ENCODE measurements at regions of chr1 and their contacts with region 1.

Region 1: DNA sequence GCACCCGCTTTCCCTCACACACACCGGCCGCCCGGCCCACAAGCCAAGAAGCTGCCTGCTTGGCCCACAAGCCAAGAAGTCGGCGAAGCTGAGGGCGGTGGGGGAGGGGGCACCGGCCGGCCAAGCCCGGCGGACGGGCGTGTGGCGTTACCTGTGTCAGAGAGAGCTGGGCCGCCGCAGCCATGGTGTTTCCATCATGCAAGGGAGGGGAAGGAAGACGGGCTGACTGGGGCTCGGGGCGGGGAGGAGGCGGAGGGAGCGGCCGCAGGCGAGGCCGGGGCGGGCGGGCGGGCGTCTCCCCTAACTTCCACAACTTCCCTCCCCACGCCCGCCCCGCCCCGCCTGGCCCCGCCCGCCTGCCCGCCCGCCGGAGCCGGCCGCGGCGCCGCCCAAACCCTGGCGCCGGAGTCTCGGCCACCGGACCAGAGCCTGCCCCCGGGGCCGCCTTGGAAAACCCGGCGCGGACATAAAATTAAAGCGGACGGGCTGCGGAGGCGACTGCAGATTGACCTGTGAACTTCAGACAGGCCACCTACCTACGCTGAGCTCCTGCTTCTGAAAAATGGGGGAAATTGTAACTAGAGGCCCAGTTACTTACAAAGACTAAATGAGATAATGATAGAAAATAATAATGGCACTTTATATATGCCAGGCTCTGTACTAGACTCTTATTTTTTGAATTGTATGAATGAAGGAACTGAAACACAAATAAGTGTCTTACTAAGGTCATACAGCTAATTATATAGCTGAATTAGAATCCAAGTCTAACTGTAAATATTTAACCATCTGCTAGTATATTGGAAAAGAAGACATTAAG is at the start of gene EPS15:
- DNase-seq: peak; percentile 62 to 90 (median 77)
- ATAC-seq: peak; percentile 86
- H3K4me3 ChIP-seq: peak within 1 kb of the TSS; percentile 87
- H3K4me3 Mint-ChIP-seq: peak within 1 kb of the TSS; percentile 89 to 97 (median 94)
- H3K27ac ChIP-seq: peak within 1 kb of the TSS; percentile 66
- H3K27ac Mint-ChIP-seq: peak within 1 kb of the TSS; percentile 86 to 95 (median 90)
- H3K4me1 ChIP-seq: peaks cover 31 to 34% of the 10 kb centered on the region in 2 donors
- H3K4me1 Mint-ChIP-seq: peaks cover 46 to 58% (median 55%) of the 10 kb centered on the region in 7 donors
- H3K27me3 ChIP-seq: no peaks in the 10 kb centered on the region
- H3K27me3 Mint-ChIP-seq: no peaks in the 10 kb centered on the region
- total RNA-seq, gene EPS15: 44.8 to 79.9 (median 53.5) TPM

Region 2: GRCh38 chr1:50959913-50960844 is 559.1 kb before region 1 on chr1 and contains the start of gene FAF1:
- CTCF ChIA-PET with region 1: no interaction called
- POLR2A ChIA-PET with region 1: no interaction called
- intact Hi-C with region 1: loop called in 1 of 2 experiments (anchors 2 kb)
- DNase-seq: peak; percentile 94 to 98 (median 98)
- ATAC-seq: peak; percentile 98
- H3K4me3 ChIP-seq: peak within 1 kb of the TSS; percentile 61
- H3K4me3 Mint-ChIP-seq: peak within 1 kb of the TSS; percentile 82 to 98 (median 92)
- H3K27ac ChIP-seq: peak within 1 kb of the TSS; percentile 71
- H3K27ac Mint-ChIP-seq: peak within 1 kb of the TSS; percentile 64 to 97 (median 96)
- H3K4me1 ChIP-seq: peaks cover 7% of the 10 kb centered on the region in 2 donors
- H3K4me1 Mint-ChIP-seq: peaks cover 14 to 35% (median 24%) of the 10 kb centered on the region in 7 donors
- H3K27me3 ChIP-seq: no peaks in the 10 kb centered on the region
- H3K27me3 Mint-ChIP-seq: peaks cover 0 to 9% (median 0%) of the 10 kb centered on the region in 5 donors
- total RNA-seq, gene FAF1: 46.4 to 66.6 (median 52.5) TPM

Region 3: DNA sequence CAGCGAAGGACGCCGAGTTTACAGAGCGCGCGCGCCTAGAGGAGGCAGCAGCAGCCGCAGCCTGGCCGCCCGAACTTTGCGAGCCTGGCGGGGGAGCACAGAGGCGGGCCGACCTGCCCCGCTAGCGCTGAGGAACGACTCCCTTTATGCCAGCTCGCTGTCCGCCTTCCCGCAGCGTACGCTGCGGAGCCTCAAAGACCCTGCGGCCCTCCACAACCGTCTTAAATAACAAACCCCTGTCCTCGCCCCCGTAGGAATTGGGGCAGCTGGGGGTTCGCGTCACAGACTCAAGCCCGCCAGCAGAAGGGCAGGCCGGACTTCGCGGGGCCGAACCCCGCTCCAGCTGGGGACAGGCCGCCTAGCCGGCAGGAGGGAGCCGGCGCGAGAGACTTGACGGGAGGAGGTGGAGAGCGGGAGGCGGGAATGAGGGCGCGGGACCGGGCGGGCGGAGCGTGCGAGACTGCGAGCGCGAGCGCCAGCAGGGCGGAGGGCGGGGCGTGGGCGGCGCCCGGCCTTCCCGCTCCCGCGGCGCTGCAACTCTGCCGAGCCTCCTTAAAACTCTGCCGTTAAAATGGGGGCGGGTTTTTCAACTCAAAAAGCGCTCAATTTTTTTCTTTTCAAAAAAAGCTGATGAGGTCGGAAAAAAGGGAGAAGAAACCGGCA is 551.0 kb before region 1 on chr1:
- CTCF ChIA-PET with region 1: no interaction called
- POLR2A ChIA-PET with region 1: no interaction called
- intact Hi-C with region 1: loop called in 1 of 2 experiments (anchors 1 kb)
- DNase-seq: peak; percentile 67 to 86 (median 85)
- ATAC-seq: peak; percentile 89
- H3K4me3 ChIP-seq: peak overlapping the region; percentile 83
- H3K4me3 Mint-ChIP-seq: peak overlapping the region; percentile 92 to 99 (median 98)
- H3K27ac ChIP-seq: peak overlapping the region; percentile 96
- H3K27ac Mint-ChIP-seq: peak overlapping the region; percentile 71 to 100 (median 91)
- H3K4me1 ChIP-seq: peaks cover 6 to 15% of the 10 kb centered on the region in 2 donors
- H3K4me1 Mint-ChIP-seq: peaks cover 18 to 29% (median 26%) of the 10 kb centered on the region in 7 donors
- H3K27me3 ChIP-seq: no peaks in the 10 kb centered on the region
- H3K27me3 Mint-ChIP-seq: peaks cover 0 to 12% (median 2%) of the 10 kb centered on the region in 5 donors

Region 4: GRCh38 chr1:51569284-51570062 is 50.2 kb after region 1 on chr1:
- CTCF ChIA-PET with region 1: no interaction called
- POLR2A ChIA-PET with region 1: interaction called, 3 read pairs
- intact Hi-C with region 1: loop called in 1 of 2 experiments (anchors 2 kb)
- DNase-seq: peak in 7 of 9 donors; percentile 11 to 37 (median 28)
- ATAC-seq: peak; percentile 71
- H3K4me3 ChIP-seq: peak overlapping the region; percentile 3
- H3K4me3 Mint-ChIP-seq: peak overlapping the region in 9 of 10 donors; percentile 31 to 71 (median 61)
- H3K27ac ChIP-seq: peak overlapping the region; percentile 48
- H3K27ac Mint-ChIP-seq: peak overlapping the region; percentile 67 to 92 (median 83)
- H3K4me1 ChIP-seq: peaks cover 22 to 24% of the 10 kb centered on the region in 2 donors
- H3K4me1 Mint-ChIP-seq: peaks cover 18 to 37% (median 28%) of the 10 kb centered on the region in 7 donors
- H3K27me3 ChIP-seq: no peaks in the 10 kb centered on the region
- H3K27me3 Mint-ChIP-seq: no peaks in the 10 kb centered on the region

Region 5: GRCh38 chr1:51616901-51617708 is 97.8 kb after region 1 on chr1 and contains the start of gene OSBPL9:
- CTCF ChIA-PET with region 1: interaction called, 6 read pairs
- POLR2A ChIA-PET with region 1: no interaction called
- intact Hi-C with region 1: loop called (anchors 1 kb)
- DNase-seq: peak; percentile 69 to 89 (median 84)
- ATAC-seq: peak; percentile 98
- H3K4me3 ChIP-seq: peak within 1 kb of the TSS; percentile 95
- H3K4me3 Mint-ChIP-seq: peak within 1 kb of the TSS; percentile 98 to 100 (median 99)
- H3K27ac ChIP-seq: peak within 1 kb of the TSS; percentile 86
- H3K27ac Mint-ChIP-seq: peak within 1 kb of the TSS; percentile 94 to 100 (median 99)
- H3K4me1 ChIP-seq: peaks cover 6 to 15% of the 10 kb centered on the region in 2 donors
- H3K4me1 Mint-ChIP-seq: peaks cover 22 to 60% (median 48%) of the 10 kb centered on the region in 7 donors
- H3K27me3 ChIP-seq: no peaks in the 10 kb centered on the region
- H3K27me3 Mint-ChIP-seq: peaks cover 0 to 6% (median 3%) of the 10 kb centered on the region in 5 donors
- total RNA-seq, gene OSBPL9: 44.5 to 56.9 (median 46.6) TPM

Region 6: GRCh38 chr1:51729156-51729823 is 210.0 kb after region 1 on chr1:
- CTCF ChIA-PET with region 1: no interaction called
- POLR2A ChIA-PET with region 1: no interaction called
- intact Hi-C with region 1: loop called (anchors 1 kb)
- DNase-seq: peak; percentile 73 to 95 (median 88)
- ATAC-seq: peak; percentile 96
- H3K4me3 ChIP-seq: peak overlapping the region; percentile 87
- H3K4me3 Mint-ChIP-seq: peak overlapping the region; percentile 88 to 94 (median 92)
- H3K27ac ChIP-seq: peak overlapping the region; percentile 78
- H3K27ac Mint-ChIP-seq: peak overlapping the region; percentile 77 to 93 (median 89)
- H3K4me1 ChIP-seq: peaks cover 11 to 19% of the 10 kb centered on the region in 2 donors
- H3K4me1 Mint-ChIP-seq: peaks cover 17 to 56% (median 48%) of the 10 kb centered on the region in 7 donors
- H3K27me3 ChIP-seq: no peaks in the 10 kb centered on the region
- H3K27me3 Mint-ChIP-seq: no peaks in the 10 kb centered on the region

Region 7: DNA sequence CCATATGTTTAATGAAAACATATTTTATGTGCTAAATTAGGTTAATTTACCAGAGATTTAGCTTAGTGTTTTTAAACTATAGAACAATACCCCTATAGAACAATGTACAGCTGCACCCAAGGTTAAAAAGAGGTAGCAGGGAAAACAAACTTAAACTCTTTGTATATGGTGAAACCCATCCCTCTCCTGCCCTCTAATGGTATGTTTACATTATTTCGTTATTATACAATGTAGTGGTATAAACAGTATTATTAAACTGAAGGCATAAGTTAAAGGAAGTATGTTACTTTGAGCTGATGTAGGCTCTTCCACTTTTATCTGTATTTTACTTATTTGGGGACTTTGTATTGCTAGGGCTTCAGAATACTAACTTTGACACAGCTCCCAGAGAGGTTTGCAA is 1306.6 kb after region 1 on chr1:
- CTCF ChIA-PET with region 1: no interaction called
- POLR2A ChIA-PET with region 1: no interaction called
- intact Hi-C with region 1: no loop called
- DNase-seq: peak in 1 of 9 donors; percentile 13
- ATAC-seq: peak; percentile 42
- H3K4me3 ChIP-seq: no peak overlapping the region
- H3K4me3 Mint-ChIP-seq: no peak overlapping the region
- H3K27ac ChIP-seq: no peak overlapping the region
- H3K27ac Mint-ChIP-seq: peak overlapping the region in 5 of 9 donors; percentile 12 to 59 (median 32)
- H3K4me1 ChIP-seq: no peaks in the 10 kb centered on the region
- H3K4me1 Mint-ChIP-seq: no peaks in the 10 kb centered on the region
- H3K27me3 ChIP-seq: no peaks in the 10 kb centered on the region
- H3K27me3 Mint-ChIP-seq: no peaks in the 10 kb centered on the region

Measured in naive thymus-derived CD4-positive, alpha-beta T cell (primary cell).